ENCODE measurements at regions of chr9 and their contacts with region 1.

Region 1: DNA sequence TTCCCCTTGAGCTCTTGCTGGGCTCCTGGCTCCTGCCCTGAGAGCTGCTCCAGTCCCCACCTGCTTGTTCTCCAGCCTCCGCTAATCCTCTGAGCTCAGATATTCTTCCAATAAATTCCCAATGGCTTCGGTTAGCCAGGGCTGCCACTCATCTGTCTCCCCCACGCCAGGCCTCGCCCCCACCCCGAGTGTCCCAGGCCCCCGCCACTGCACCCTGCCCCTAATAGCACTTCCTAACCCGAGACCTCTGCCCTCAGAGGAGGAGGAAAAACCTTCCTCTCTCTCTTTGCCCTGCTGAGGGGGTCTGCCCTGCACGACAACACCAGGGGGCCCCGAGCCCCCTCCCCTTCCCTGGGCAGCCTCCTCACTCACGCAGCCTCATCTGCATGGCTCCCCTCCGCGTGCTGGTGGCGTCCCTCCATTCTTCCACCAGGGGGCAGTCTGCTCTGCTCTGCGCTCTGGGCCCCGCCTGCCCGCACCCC is 5.4 kb upstream of the LCN15 start:
- DNase-seq: peak; percentile 96
- H3K4me3 ChIP-seq: peak overlapping the region in 1 of 2 experiments; percentile 25; a peak in 1 of 4 replicates
- H3K27ac ChIP-seq: no peak overlapping the region; a peak in 1 of 4 replicates
- H3K4me1 ChIP-seq: peaks cover 0 to 3% of the 10 kb centered on the region in 2 experiments; a peak in 1 of 4 replicates
- H3K27me3 ChIP-seq: no peaks in the 10 kb centered on the region; the same call in 1 of the 2 replicates
- CTCF ChIP-seq: peak; percentile 61
- EP300 ChIP-seq: no peak
- RAD21 ChIP-seq: peak; percentile 33; the same call in 1 of the 2 replicates

Region 2: DNA sequence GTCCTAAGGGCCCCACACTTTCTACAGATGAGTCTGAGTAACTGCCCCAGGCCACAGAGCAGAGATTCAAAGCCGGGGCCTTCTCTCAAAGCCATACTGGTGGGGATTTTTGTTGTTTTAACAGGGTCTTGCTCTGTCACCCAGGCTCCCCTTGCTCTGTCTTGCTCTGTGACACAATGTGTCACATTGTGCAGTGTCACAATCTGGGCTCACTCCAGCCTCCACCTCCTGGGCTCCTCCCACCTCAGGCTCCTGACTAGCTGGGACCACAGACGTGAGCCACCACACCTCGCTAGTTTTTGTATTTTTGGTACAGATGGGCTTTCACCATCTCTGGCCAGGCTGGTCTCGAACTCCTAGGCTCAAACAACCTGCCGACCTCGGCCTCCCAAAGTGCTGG is 91.1 kb before region 1 on chr9:
- CTCF ChIA-PET with region 1: no interaction called
- POLR2A ChIA-PET with region 1: no interaction called
- DNase-seq: no peak
- H3K4me3 ChIP-seq: no peak overlapping the region
- H3K27ac ChIP-seq: no peak overlapping the region; a peak in 1 of 4 replicates
- H3K4me1 ChIP-seq: peaks cover 0 to 21% of the 10 kb centered on the region in 2 experiments; a peak in 1 of 4 replicates
- H3K27me3 ChIP-seq: no peaks in the 10 kb centered on the region
- CTCF ChIP-seq: no peak
- EP300 ChIP-seq: no peak
- RAD21 ChIP-seq: no peak

Region 3: DNA sequence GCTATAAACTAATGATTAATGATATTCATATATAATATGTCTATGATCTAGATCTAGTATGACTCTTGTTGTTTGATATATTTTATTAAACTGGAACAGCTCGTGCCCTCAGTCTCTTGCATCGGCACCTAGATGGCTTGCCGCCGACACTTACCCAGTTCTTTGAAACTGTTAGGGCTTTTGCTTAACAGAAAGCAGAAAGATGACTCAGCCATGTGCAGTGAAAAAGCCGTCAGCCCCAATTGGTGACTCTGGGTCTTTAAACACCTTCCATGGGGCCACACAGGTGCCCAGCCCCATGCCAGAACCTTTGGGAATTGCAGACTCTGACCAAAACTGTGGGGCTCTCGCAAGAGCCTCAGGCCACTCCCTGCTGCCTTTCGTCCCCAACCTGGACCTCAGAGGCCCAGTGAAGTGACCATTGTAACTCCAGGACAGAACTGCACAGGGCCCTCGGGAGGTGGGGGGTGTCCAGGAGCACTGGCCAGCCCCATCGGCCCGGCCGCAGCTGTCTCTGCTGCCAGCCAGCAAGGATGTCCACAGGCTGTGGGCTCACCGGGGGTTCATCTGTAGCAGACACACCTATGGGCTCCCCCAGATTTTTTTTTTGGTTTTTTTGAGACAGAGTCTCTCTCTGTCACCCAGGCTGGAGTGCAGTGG is 34.8 kb before region 1 on chr9:
- CTCF ChIA-PET with region 1: no interaction called
- POLR2A ChIA-PET with region 1: no interaction called
- DNase-seq: no peak
- H3K4me3 ChIP-seq: no peak overlapping the region
- H3K27ac ChIP-seq: no peak overlapping the region
- H3K4me1 ChIP-seq: peaks cover 0 to 4% of the 10 kb centered on the region in 2 experiments; a peak in 1 of 4 replicates
- H3K27me3 ChIP-seq: no peaks in the 10 kb centered on the region
- CTCF ChIP-seq: no peak
- EP300 ChIP-seq: no peak
- RAD21 ChIP-seq: no peak

Region 4: DNA sequence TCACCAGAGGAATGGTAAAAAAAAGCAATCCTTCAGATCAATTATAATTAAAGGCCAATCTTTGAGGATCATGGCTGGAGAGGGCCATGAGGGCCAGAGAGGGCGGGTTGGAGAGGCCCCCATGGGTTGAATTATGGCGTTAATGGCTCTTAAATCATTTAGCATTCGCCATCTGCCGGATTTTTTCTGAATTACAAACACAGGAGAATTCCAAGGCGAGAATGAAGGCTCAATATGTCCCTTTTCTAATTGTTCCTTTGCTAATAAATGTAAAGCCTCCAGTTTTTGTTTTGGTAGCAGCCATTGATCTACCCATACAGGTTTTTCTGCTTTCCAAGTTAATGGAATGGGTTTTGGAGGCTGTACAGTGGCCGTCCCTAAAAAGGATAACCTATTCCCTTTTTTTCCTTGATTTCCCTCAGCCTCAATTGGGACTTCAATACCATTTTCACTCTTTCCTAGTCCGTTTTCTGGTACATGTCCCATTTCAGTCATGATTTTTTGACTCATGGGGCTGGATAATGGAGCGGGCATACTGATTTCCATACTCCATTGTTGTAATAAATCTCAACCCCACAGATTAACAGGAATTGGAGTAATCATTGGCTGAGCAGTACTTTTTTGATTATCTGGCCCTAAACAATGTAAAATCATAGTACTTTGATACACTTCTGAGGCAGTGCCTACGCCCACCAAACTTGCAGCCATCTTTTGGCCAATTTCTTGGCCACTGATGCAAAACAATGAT is 14.7 kb after region 1 on chr9:
- CTCF ChIA-PET with region 1: interaction called, 57 read pairs
- POLR2A ChIA-PET with region 1: interaction called, 3 read pairs
- DNase-seq: peak; percentile 60
- H3K4me3 ChIP-seq: no peak overlapping the region
- H3K27ac ChIP-seq: no peak overlapping the region
- H3K4me1 ChIP-seq: peaks cover 0 to 2% of the 10 kb centered on the region in 2 experiments; a peak in 2 of 4 replicates
- H3K27me3 ChIP-seq: peaks cover 21% of the 10 kb centered on the region; the same call in 1 of the 2 replicates
- CTCF ChIP-seq: peak; percentile 63
- EP300 ChIP-seq: no peak
- RAD21 ChIP-seq: peak; percentile 29

Region 5: GRCh38 chr9:136849038-136849959 is 79.5 kb after region 1 on chr9 and contains the start of gene PHPT1:
- CTCF ChIA-PET with region 1: no interaction called
- POLR2A ChIA-PET with region 1: no interaction called
- DNase-seq: peak; percentile 99
- H3K4me3 ChIP-seq: peak within 1 kb of the TSS; percentile 89 to 97
- H3K27ac ChIP-seq: peak within 1 kb of the TSS; percentile 84 to 98
- H3K4me1 ChIP-seq: peaks cover 4 to 13% of the 10 kb centered on the region in 2 experiments; a peak in 2 of 4 replicates
- H3K27me3 ChIP-seq: no peaks in the 10 kb centered on the region
- CTCF ChIP-seq: no peak
- EP300 ChIP-seq: no peak
- RAD21 ChIP-seq: no peak
- polyA plus RNA-seq, gene PHPT1: 338 and 517 TPM in 2 replicates

Region 6: DNA sequence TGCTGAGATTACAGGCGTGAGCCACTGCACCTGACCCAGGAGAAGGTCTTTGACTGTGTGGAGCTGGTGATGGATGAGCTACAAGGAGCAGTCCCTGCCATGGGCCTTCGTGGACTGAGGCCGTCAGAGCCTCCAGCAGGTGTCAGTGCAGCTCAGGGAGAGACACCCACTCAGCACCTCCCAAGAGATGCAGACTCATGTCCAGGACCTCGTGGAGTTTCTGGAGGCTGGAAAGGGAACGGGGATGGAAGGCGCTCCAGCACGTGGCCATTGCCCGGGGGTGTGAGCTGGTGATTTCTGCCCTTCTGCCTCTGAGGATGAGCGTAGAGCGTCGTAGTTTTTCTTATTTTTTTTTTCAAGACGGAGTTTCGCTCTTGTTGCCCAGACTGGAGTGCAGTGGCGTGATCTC is 517.2 kb after region 1 on chr9:
- CTCF ChIA-PET with region 1: no interaction called
- POLR2A ChIA-PET with region 1: no interaction called
- DNase-seq: peak; percentile 86
- H3K4me3 ChIP-seq: no peak overlapping the region
- H3K27ac ChIP-seq: no peak overlapping the region
- H3K4me1 ChIP-seq: no peaks in the 10 kb centered on the region
- H3K27me3 ChIP-seq: no peaks in the 10 kb centered on the region
- CTCF ChIP-seq: peak; percentile 59
- EP300 ChIP-seq: no peak
- RAD21 ChIP-seq: peak; percentile 79

Measured in SK-N-SH (cell line).